ENCODE measurements at regions of chr3 and their contacts with region 1.

Region 1: DNA sequence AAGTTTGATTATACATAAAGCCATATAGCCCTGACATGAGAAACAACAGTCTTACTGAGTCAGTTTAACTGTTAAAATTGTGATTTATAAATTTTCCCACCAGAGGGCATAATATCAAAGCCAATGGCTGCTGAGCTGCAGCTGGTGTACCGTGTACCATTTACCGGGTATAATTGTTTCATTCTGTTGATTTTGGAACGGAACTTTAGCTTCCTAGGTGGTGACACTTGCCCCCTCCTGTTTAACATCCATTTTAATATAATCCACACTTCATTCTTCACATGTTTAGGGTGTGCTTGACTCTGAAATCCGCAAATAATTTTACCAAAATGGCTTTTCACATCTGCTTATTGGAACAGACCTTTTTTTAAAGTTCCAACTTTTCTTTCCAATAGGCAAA is 72.8 kb downstream of the SLC9A9 start:
- DNase-seq: no peak
- H3K4me3 ChIP-seq: peak overlapping the region in 1 of 2 donors; percentile 15
- H3K27ac ChIP-seq: no peak overlapping the region
- H3K4me1 ChIP-seq: no peaks in the 10 kb centered on the region
- H3K27me3 ChIP-seq: no peaks in the 10 kb centered on the region
- CTCF ChIP-seq: peak; percentile 19 to 47 (median 24)
- POLR2A ChIP-seq: no peak

Region 2: DNA sequence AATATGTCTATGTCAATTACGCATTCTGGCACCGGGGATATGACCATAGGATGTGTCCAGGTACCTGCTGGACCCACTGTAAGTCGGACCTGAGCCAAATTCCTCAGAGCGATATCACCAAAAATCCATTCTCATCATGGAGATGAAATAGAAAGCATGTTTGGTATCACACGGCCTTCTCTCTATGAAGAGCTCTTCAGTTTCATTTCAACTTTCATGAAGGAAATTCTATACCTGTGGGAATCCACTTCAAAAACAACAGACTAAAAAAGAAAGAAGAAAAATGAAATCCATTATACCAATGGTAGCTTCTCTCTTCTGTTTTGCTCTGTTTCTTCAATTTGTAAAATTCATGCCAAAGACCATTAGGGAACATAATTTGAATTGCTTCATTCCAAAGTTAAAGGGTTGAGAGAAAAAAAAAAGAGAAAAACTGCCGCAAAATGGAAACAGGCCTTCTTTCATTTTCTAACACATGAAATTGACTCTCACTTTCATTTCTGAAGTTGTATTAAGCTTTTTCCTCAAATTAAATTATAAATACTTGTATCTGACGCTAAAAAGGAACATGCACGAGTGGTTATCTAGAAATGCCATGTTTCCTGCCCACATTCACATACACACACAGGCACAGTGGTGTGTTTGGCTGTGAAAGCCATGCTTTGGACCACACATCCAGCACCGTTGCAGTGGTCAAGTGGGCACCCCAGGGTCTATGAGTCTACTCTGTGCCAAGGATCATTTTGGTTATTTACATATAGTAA is 149.2 kb after region 1 on chr3:
- intact Hi-C with region 1: no loop called
- DNase-seq: no peak
- H3K4me3 ChIP-seq: no peak overlapping the region
- H3K27ac ChIP-seq: no peak overlapping the region
- H3K4me1 ChIP-seq: no peaks in the 10 kb centered on the region
- H3K27me3 ChIP-seq: no peaks in the 10 kb centered on the region
- CTCF ChIP-seq: no peak
- POLR2A ChIP-seq: no peak

Region 3: GRCh38 chr3:143951351-143951971 is 176.0 kb after region 1 on chr3:
- intact Hi-C with region 1: loop called (anchors 10 kb)
- DNase-seq: no peak
- H3K4me3 ChIP-seq: no peak overlapping the region
- H3K27ac ChIP-seq: no peak overlapping the region
- H3K4me1 ChIP-seq: no peaks in the 10 kb centered on the region
- H3K27me3 ChIP-seq: no peaks in the 10 kb centered on the region
- CTCF ChIP-seq: peak; percentile 43 to 71 (median 57)
- POLR2A ChIP-seq: no peak

Measured in vagina (tissue), 2 donors.